ENCODE measurements at regions of chr18 and their contacts with region 1.

Region 1: DNA sequence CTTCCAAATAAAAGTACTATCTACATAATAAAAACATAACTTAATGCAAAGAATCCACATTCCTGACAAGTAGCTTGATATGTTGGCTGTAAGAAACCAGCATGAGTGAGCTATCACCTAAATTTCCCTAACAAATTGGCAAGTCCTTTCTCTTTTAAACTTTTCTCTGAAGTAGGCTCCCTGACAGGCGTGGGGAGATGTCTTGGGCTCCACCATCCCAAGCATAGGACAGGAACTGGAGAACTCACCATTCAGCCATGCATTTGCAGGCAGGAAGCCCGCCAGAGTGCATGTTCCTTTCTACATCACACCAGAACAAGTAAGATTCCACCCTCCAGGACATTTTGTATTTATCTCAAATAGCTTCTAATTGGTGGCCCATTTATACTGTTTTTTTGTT is 921.9 kb upstream of the CELF4 start:
- DNase-seq: no peak
- ATAC-seq: peak; percentile 66; the same call in 1 of the 2 replicates
- H3K4me3 Mint-ChIP-seq: no peak overlapping the region
- H3K27ac Mint-ChIP-seq: no peak overlapping the region
- H3K4me1 Mint-ChIP-seq: peaks cover 29% of the 10 kb centered on the region
- H3K27me3 Mint-ChIP-seq: no peaks in the 10 kb centered on the region
- CTCF ChIP-seq: no peak

Region 2: GRCh38 chr18:40058811-40059570 is 1571.5 kb after region 1 on chr18:
- CTCF ChIA-PET with region 1: no interaction called
- POLR2A ChIA-PET with region 1: interaction called, 13 read pairs
- DNase-seq: no peak
- ATAC-seq: no peak
- H3K4me3 Mint-ChIP-seq: no peak overlapping the region
- H3K27ac Mint-ChIP-seq: no peak overlapping the region
- H3K4me1 Mint-ChIP-seq: peaks cover 6% of the 10 kb centered on the region
- H3K27me3 Mint-ChIP-seq: no peaks in the 10 kb centered on the region
- CTCF ChIP-seq: no peak

Measured in WTC11 (cell line).